GM12878 (cell line): ENCODE measurements at regions of chr2 and their contacts with region 1.

Region 1: GRCh38 chr2:44479122-44479887 is 117.6 kb downstream of the CAMKMT start:
- DNase-seq: peak; percentile 61
- ATAC-seq: peak; percentile 100
- H3K4me3 ChIP-seq: no peak overlapping the region
- H3K27ac ChIP-seq: no peak overlapping the region
- H3K4me1 ChIP-seq: no peaks in the 10 kb centered on the region
- H3K27me3 ChIP-seq: no peaks in the 10 kb centered on the region
- CTCF ChIP-seq: peak; percentile 98 to 100 (median 100); a peak in 5 of 6 replicates
- EP300 ChIP-seq: no peak
- POLR2A ChIP-seq: no peak
- RAD21 ChIP-seq: peak; percentile 99

Region 2: GRCh38 chr2:44191739-44192138 is 287.6 kb before region 1 on chr2:
- CTCF ChIA-PET with region 1: no interaction called
- POLR2A ChIA-PET with region 1: no interaction called
- RAD21 ChIA-PET with region 1: no interaction called
- SMC1A ChIA-PET with region 1: no interaction called
- in situ Hi-C with region 1: no loop called
- intact Hi-C with region 1: no loop called
- DNase-seq: peak; percentile 42
- ATAC-seq: peak; percentile 94
- H3K4me3 ChIP-seq: peak overlapping the region; percentile 37; the same call in 1 of the 2 replicates
- H3K27ac ChIP-seq: peak overlapping the region; percentile 80
- H3K4me1 ChIP-seq: peaks cover 43% of the 10 kb centered on the region
- H3K27me3 ChIP-seq: no peaks in the 10 kb centered on the region
- CTCF ChIP-seq: no peak
- EP300 ChIP-seq: peak; percentile 40 to 53; a peak in 1 of 4 replicates
- POLR2A ChIP-seq: no peak
- RAD21 ChIP-seq: no peak

Region 3: GRCh38 chr2:44369392-44369791 is 109.9 kb before region 1 on chr2:
- CTCF ChIA-PET with region 1: no interaction called
- POLR2A ChIA-PET with region 1: no interaction called
- RAD21 ChIA-PET with region 1: no interaction called
- SMC1A ChIA-PET with region 1: no interaction called
- in situ Hi-C with region 1: no loop called
- intact Hi-C with region 1: no loop called
- DNase-seq: no peak
- ATAC-seq: peak; percentile 46
- H3K4me3 ChIP-seq: no peak overlapping the region
- H3K27ac ChIP-seq: no peak overlapping the region
- H3K4me1 ChIP-seq: no peaks in the 10 kb centered on the region
- H3K27me3 ChIP-seq: no peaks in the 10 kb centered on the region
- CTCF ChIP-seq: no peak
- EP300 ChIP-seq: no peak
- POLR2A ChIP-seq: no peak
- RAD21 ChIP-seq: no peak

Region 4: GRCh38 chr2:44456946-44457345 is 22.4 kb before region 1 on chr2:
- CTCF ChIA-PET with region 1: interaction called, 21 read pairs
- POLR2A ChIA-PET with region 1: interaction called, 3 read pairs
- RAD21 ChIA-PET with region 1: interaction called, 3 read pairs
- SMC1A ChIA-PET with region 1: no interaction called
- in situ Hi-C with region 1: no loop called
- intact Hi-C with region 1: no loop called
- DNase-seq: no peak
- ATAC-seq: no peak
- H3K4me3 ChIP-seq: no peak overlapping the region
- H3K27ac ChIP-seq: no peak overlapping the region
- H3K4me1 ChIP-seq: no peaks in the 10 kb centered on the region
- H3K27me3 ChIP-seq: no peaks in the 10 kb centered on the region
- CTCF ChIP-seq: no peak
- EP300 ChIP-seq: no peak
- POLR2A ChIP-seq: no peak
- RAD21 ChIP-seq: no peak

Region 5: GRCh38 chr2:44515416-44515815 is 36.1 kb after region 1 on chr2:
- CTCF ChIA-PET with region 1: interaction called, 11 read pairs
- POLR2A ChIA-PET with region 1: no interaction called
- RAD21 ChIA-PET with region 1: interaction called, 3 read pairs
- SMC1A ChIA-PET with region 1: interaction called, 5 read pairs
- in situ Hi-C with region 1: no loop called
- intact Hi-C with region 1: no loop called
- DNase-seq: no peak
- ATAC-seq: no peak
- H3K4me3 ChIP-seq: no peak overlapping the region
- H3K27ac ChIP-seq: no peak overlapping the region
- H3K4me1 ChIP-seq: no peaks in the 10 kb centered on the region
- H3K27me3 ChIP-seq: no peaks in the 10 kb centered on the region
- CTCF ChIP-seq: no peak
- EP300 ChIP-seq: no peak
- POLR2A ChIP-seq: no peak
- RAD21 ChIP-seq: no peak

Region 6: DNA sequence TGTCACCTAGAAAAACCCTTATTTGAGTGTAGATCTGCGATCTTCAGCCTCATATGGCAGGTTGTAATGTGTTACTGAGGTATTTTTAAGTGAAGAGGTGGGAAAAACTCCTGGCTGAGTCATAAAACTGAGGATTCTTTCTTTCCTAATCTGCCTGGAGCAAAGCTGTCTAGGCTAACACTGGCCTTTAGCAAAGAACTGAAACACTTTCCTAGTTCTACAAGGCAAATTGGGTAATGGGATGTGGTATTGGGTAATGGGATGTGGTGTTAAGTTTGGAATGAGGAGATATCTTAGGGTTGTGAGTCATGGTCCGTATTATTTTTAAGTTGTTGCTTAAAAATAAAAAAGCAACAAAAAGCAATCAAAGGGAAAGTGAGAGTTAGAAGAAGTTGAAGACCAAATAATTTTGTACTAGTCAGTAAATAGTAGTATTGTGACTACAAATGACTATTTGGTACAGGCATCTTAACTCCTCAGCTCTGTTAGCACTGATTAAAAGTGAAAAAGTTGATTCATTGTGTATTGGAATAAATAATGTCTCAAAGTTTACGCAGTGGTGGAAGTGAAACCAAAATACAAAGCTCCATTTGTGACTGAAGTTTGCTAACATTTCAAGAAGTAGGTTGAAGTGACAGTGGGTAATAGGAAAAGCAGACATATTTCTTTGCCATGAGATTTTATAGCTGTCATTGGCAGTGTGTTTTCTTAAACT is 99.3 kb after region 1 on chr2:
- CTCF ChIA-PET with region 1: interaction called, 12 read pairs
- POLR2A ChIA-PET with region 1: no interaction called
- RAD21 ChIA-PET with region 1: interaction called, 4 read pairs
- SMC1A ChIA-PET with region 1: interaction called, 14 read pairs
- in situ Hi-C with region 1: no loop called
- intact Hi-C with region 1: no loop called
- DNase-seq: peak; percentile 54
- ATAC-seq: peak; percentile 95
- H3K4me3 ChIP-seq: 0 out of 2 replicates have a peak overlapping the region, but pooled peaks have one; percentile 9
- H3K27ac ChIP-seq: peak overlapping the region; percentile 63
- H3K4me1 ChIP-seq: peaks cover 11% of the 10 kb centered on the region; the same call in 1 of the 2 replicates
- H3K27me3 ChIP-seq: no peaks in the 10 kb centered on the region
- CTCF ChIP-seq: no peak
- EP300 ChIP-seq: peak; percentile 49 to 56; a peak in 1 of 4 replicates
- POLR2A ChIP-seq: no peak
- RAD21 ChIP-seq: no peak

Region 7: DNA sequence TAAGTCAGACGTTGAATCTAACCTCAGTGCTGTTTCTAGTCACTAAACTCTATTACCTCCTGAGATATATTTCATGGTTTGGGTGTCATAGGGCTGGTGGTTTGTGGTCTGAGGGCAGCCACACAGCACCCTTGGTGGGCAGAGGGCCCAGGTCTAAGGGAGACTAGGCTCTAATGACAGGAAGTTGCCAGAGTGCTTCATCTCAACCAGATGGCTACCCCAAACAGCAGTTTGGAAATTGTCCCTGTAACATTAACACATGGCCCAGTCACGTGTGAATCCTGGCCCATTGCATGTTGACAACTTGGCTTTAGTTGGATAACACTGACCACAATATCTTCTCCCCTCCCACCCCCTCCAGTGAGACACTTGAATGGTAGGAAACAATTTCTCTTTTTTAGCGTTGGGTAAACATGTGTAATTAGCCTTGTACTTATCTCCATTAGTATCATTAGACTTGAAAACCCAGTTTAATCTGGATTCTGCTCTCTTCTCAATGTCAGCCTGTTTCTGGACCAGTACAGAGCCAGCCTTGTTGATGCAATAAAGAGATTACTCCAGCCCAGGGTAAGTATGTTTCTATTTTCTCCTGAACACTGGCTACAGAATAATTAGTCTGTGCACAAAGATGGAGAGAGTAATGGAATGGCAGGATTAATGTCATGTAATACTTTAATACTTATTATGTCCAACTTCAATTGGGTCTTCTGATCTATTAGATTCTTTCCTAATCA is 274.4 kb after region 1 on chr2:
- CTCF ChIA-PET with region 1: interaction called, 10 read pairs
- POLR2A ChIA-PET with region 1: no interaction called
- RAD21 ChIA-PET with region 1: no interaction called
- SMC1A ChIA-PET with region 1: interaction called, 5 read pairs
- in situ Hi-C with region 1: no loop called
- intact Hi-C with region 1: no loop called
- DNase-seq: peak; percentile 64
- ATAC-seq: peak; percentile 99
- H3K4me3 ChIP-seq: no peak overlapping the region
- H3K27ac ChIP-seq: no peak overlapping the region
- H3K4me1 ChIP-seq: peaks cover 3% of the 10 kb centered on the region
- H3K27me3 ChIP-seq: no peaks in the 10 kb centered on the region
- CTCF ChIP-seq: no peak
- EP300 ChIP-seq: no peak
- POLR2A ChIP-seq: no peak
- RAD21 ChIP-seq: no peak

Region 8: DNA sequence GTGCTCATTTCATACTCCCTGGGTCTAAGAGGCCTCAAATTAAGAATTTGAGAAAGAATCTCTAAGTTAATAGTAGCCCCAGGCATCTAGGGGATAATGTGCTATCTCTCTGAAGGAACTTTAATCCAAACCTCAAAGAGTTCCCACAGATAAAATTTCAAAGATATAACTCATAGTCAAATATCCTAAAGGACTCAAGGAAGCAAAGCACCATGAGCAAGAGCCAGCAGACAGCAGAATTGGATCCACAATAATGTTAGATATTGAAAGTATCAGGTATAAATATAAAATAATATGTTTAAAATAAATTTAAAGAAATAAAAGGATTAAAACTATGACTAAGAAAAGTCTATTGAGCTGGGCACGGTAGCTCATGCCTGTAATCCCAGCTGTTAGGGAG is 430.5 kb after region 1 on chr2:
- CTCF ChIA-PET with region 1: no interaction called
- POLR2A ChIA-PET with region 1: no interaction called
- RAD21 ChIA-PET with region 1: no interaction called
- SMC1A ChIA-PET with region 1: no interaction called
- in situ Hi-C with region 1: no loop called
- intact Hi-C with region 1: no loop called
- DNase-seq: no peak
- ATAC-seq: no peak
- H3K4me3 ChIP-seq: no peak overlapping the region
- H3K27ac ChIP-seq: no peak overlapping the region
- H3K4me1 ChIP-seq: no peaks in the 10 kb centered on the region
- H3K27me3 ChIP-seq: no peaks in the 10 kb centered on the region
- CTCF ChIP-seq: no peak
- EP300 ChIP-seq: no peak
- POLR2A ChIP-seq: no peak
- RAD21 ChIP-seq: no peak

Region 9: GRCh38 chr2:44964752-44965236 is 485.5 kb after region 1 on chr2:
- CTCF ChIA-PET with region 1: interaction called, 321 read pairs
- POLR2A ChIA-PET with region 1: no interaction called
- RAD21 ChIA-PET with region 1: no interaction called
- SMC1A ChIA-PET with region 1: interaction called, 3 read pairs
- in situ Hi-C with region 1: loop called (anchors 5 kb)
- intact Hi-C with region 1: no loop called
- DNase-seq: no peak
- ATAC-seq: peak; percentile 68
- H3K4me3 ChIP-seq: no peak overlapping the region
- H3K27ac ChIP-seq: no peak overlapping the region
- H3K4me1 ChIP-seq: no peaks in the 10 kb centered on the region
- H3K27me3 ChIP-seq: peaks cover 2 to 3% of the 10 kb centered on the region in 2 experiments; a peak in 1 of 4 replicates
- CTCF ChIP-seq: no peak
- EP300 ChIP-seq: no peak
- POLR2A ChIP-seq: no peak
- RAD21 ChIP-seq: no peak